ENCODE measurements at regions of chr11 and their contacts with region 1.

Region 1: GRCh38 chr11:67382276-67383136 is 9.1 kb upstream of the CLCF1 start:
- DNase-seq: peak; percentile 88
- H3K4me3 ChIP-seq: no peak overlapping the region
- H3K27ac ChIP-seq: no peak overlapping the region
- H3K4me1 ChIP-seq: peaks cover 4% of the 10 kb centered on the region
- H3K27me3 ChIP-seq: no peaks in the 10 kb centered on the region
- CTCF ChIP-seq: peak; percentile 95

Region 2: GRCh38 chr11:67265633-67266423 is 116.7 kb before region 1 on chr11:
- intact Hi-C with region 1: loop called (anchors 5 kb)
- DNase-seq: peak; percentile 83
- H3K4me3 ChIP-seq: no peak overlapping the region
- H3K27ac ChIP-seq: peak overlapping the region; percentile 41
- H3K4me1 ChIP-seq: peaks cover 33% of the 10 kb centered on the region
- H3K27me3 ChIP-seq: no peaks in the 10 kb centered on the region
- CTCF ChIP-seq: peak; percentile 50

Region 3: GRCh38 chr11:67345920-67346799 is 36.3 kb before region 1 on chr11:
- intact Hi-C with region 1: loop called (anchors 5 kb)
- DNase-seq: peak; percentile 77
- H3K4me3 ChIP-seq: no peak overlapping the region
- H3K27ac ChIP-seq: peak overlapping the region; percentile 91
- H3K4me1 ChIP-seq: peaks cover 11% of the 10 kb centered on the region
- H3K27me3 ChIP-seq: no peaks in the 10 kb centered on the region
- CTCF ChIP-seq: peak; percentile 68

Measured in colonic mucosa (tissue), 4 donors.